ENCODE measurements at regions of chr4 and their contacts with region 1.

Region 1: DNA sequence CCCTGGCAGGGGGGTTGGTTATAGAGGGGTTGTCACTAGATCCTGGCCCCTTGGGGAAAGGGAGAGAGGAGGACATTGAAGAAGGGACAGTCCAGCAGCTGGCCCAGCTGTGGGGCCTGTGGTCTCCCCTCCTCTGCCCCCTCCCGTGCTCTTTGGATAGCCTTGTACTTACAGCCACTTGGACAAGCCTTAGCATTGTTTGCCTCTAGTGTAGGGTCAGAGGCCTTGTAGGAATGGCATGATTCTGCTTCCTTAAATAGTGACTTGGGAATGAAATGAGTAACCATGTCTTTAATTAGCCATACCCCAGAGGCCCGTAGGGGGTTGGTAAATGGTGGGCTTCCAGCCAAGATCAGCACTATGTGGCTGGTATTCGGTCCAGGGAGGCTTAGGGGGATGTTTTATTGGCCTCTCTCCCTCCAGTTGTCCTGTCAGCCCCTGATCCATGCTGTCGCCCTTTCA is 230.6 kb downstream of the PTTG2 start:
- DNase-seq: no peak
- H3K4me3 ChIP-seq: no peak overlapping the region
- H3K27ac ChIP-seq: no peak overlapping the region
- H3K4me1 ChIP-seq: no peaks in the 10 kb centered on the region
- H3K27me3 ChIP-seq: no peaks in the 10 kb centered on the region
- CTCF ChIP-seq: no peak
- POLR2A ChIP-seq: no peak

Region 2: DNA sequence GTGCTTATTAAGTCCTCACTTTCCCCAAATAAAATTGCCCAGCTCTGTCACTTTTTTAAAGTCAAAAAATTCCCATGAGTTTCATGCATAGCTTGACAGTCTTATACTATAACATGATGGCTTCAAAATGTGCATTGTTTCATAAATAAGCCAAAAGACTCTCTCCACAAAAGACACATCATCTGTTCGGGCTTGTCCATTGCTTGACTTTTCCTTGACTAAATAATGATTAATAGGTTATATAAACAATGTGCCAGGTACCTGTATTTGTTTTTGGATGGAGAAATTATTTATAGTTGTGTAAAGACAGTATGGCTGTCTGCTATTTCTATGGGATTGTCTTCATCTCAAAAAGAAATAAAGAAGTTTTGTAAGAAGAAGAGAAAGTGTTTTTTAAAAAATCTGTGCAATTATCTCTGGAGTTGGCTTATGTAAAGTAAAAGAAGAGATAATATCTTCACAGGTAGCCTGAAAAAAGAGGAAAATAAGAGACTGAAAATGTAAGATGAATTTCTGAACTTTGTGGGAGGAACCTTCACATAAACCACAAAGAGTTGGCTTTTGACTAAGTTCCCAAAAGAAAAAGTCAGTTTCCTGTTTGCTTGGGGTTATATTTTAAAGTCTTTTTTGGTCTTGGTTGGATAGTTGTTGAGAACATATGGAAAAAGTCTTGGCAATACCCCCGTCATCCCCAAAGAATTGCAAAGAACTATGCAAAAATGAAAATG is 144.2 kb after region 1 on chr4:
- intact Hi-C with region 1: loop called (anchors 10 kb)
- DNase-seq: no peak
- H3K4me3 ChIP-seq: no peak overlapping the region
- H3K27ac ChIP-seq: no peak overlapping the region
- H3K4me1 ChIP-seq: no peaks in the 10 kb centered on the region
- H3K27me3 ChIP-seq: no peaks in the 10 kb centered on the region
- CTCF ChIP-seq: no peak
- POLR2A ChIP-seq: no peak

Region 3: DNA sequence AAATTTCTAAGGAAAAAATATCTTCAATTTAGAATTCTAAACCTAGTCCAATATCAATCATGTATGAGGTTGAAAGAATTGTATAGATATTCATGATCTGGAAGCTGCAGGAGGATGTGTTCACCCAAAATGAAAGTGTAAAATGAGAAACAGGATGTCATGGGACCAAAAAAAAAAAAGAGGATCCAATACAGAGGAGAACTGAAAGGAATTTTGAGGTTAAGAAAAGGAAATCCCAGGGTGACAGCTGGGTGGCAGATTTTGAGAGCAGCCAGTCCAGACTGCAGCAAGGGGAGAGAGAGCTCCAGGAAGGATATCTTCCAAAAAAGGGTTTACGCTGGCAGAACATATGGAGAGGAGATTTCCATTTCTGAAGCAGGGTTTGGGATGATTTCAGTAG is 553.1 kb after region 1 on chr4:
- intact Hi-C with region 1: no loop called
- DNase-seq: no peak
- H3K4me3 ChIP-seq: no peak overlapping the region
- H3K27ac ChIP-seq: no peak overlapping the region
- H3K4me1 ChIP-seq: no peaks in the 10 kb centered on the region
- H3K27me3 ChIP-seq: no peaks in the 10 kb centered on the region
- CTCF ChIP-seq: no peak
- POLR2A ChIP-seq: no peak